ENCODE measurements at regions of chr19 and their contacts with region 1.

Region 1: DNA sequence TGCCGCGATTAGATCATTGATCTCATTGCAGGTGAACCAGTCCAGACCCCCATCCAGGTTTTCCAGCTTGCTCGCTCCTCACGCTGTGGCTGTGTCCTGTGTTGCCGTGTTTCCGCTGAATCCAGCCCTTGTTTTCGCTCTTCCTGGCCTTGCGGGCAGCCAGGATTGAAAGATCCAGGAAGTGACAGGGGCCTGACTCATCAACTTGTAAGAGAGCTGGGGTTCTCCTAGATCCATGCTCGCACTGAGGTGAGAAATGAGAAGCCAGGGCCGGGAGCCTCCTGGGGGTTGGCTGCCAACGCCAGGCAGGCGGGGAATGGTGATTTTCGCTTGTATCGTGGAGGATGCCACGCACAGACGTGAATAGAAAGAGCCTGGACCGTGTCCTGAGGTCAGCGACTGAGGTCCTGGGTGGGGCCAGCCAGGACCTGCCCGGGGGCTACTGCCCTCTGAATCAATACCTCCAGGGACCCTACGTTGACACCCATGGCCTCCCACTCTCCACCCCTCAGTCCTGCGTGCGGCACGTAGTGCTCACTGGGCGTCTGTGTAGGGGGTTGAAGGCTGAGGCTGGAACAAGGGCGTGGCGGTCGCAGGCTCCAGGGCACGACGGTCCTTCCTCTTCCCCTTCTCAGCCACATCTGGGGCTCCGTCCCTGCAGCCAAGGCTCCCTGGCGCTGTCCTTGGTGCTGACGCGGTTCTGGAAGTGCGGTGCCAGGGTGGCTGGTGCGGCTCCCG is 7.3 kb upstream of the PTPRH start:
- DNase-seq: peak; percentile 100
- ATAC-seq: peak; percentile 83
- H3K4me3 ChIP-seq: peak overlapping the region; percentile 56 to 67
- H3K27ac ChIP-seq: peak overlapping the region; percentile 87
- H3K4me1 ChIP-seq: peaks cover 11 to 39% of the 10 kb centered on the region in 2 experiments
- H3K27me3 ChIP-seq: no peaks in the 10 kb centered on the region
- CTCF ChIP-seq: no peak
- POLR2A ChIP-seq: peak; percentile 23
- RAD21 ChIP-seq: peak; percentile 36; the same call in 1 of the 2 replicates

Region 2: GRCh38 chr19:55178781-55179599 is 37.6 kb before region 1 on chr19:
- CTCF ChIA-PET with region 1: interaction called, 3 read pairs
- POLR2A ChIA-PET with region 1: interaction called, 3 read pairs
- RAD21 ChIA-PET with region 1: no interaction called
- intact Hi-C with region 1: loop called (anchors 1 kb)
- DNase-seq: peak; percentile 69
- ATAC-seq: peak; percentile 71
- H3K4me3 ChIP-seq: peak overlapping the region; percentile 22 to 40
- H3K27ac ChIP-seq: 0 out of 2 replicates have a peak overlapping the region, but pooled peaks have one; percentile 12
- H3K4me1 ChIP-seq: peaks cover 13 to 43% of the 10 kb centered on the region in 2 experiments; a peak in 3 of 4 replicates
- H3K27me3 ChIP-seq: no peaks in the 10 kb centered on the region
- CTCF ChIP-seq: no peak
- POLR2A ChIP-seq: no peak
- RAD21 ChIP-seq: no peak

Region 3: GRCh38 chr19:55418185-55418584 is 201.6 kb after region 1 on chr19:
- CTCF ChIA-PET with region 1: interaction called, 4 read pairs
- POLR2A ChIA-PET with region 1: no interaction called
- RAD21 ChIA-PET with region 1: no interaction called
- intact Hi-C with region 1: loop called (anchors 1 kb)
- DNase-seq: peak; percentile 74
- ATAC-seq: peak; percentile 99
- H3K4me3 ChIP-seq: no peak overlapping the region
- H3K27ac ChIP-seq: no peak overlapping the region
- H3K4me1 ChIP-seq: peaks cover 2 to 6% of the 10 kb centered on the region in 2 experiments; a peak in 1 of 4 replicates
- H3K27me3 ChIP-seq: no peaks in the 10 kb centered on the region
- CTCF ChIP-seq: peak; percentile 69 to 87 (median 80)
- POLR2A ChIP-seq: no peak
- RAD21 ChIP-seq: peak; percentile 97

Region 4: GRCh38 chr19:55447421-55448174 is 231.0 kb after region 1 on chr19:
- CTCF ChIA-PET with region 1: no interaction called
- POLR2A ChIA-PET with region 1: no interaction called
- RAD21 ChIA-PET with region 1: no interaction called
- intact Hi-C with region 1: loop called (anchors 10 kb)
- DNase-seq: no peak
- ATAC-seq: peak; percentile 49
- H3K4me3 ChIP-seq: no peak overlapping the region
- H3K27ac ChIP-seq: no peak overlapping the region; the same call in 1 of the 2 replicates
- H3K4me1 ChIP-seq: no peaks in the 10 kb centered on the region
- H3K27me3 ChIP-seq: peaks cover 19% of the 10 kb centered on the region; the same call in 1 of the 2 replicates
- CTCF ChIP-seq: no peak
- POLR2A ChIP-seq: no peak
- RAD21 ChIP-seq: no peak

Measured in HCT116 (cell line).